Endothelial cell of umbilical vein (primary cell): ENCODE measurements at regions of chr14 and their contacts with region 1.

Region 1: GRCh38 chr14:50830932-50831725 is at the start of gene NIN:
- DNase-seq: peak; percentile 71
- H3K4me3 ChIP-seq: peak within 1 kb of the TSS; percentile 67 to 92 (median 69)
- H3K27ac ChIP-seq: peak within 1 kb of the TSS; percentile 61
- H3K4me1 ChIP-seq: peaks cover 20% of the 10 kb centered on the region
- H3K27me3 ChIP-seq: no peaks in the 10 kb centered on the region
- CTCF ChIP-seq: no peak
- POLR2A ChIP-seq: peak; percentile 60
- total RNA-seq, gene NIN: 68.2 and 76.3 TPM in 2 replicates

Region 2: GRCh38 chr14:50311975-50312733 is 519.0 kb before region 1 on chr14 and contains the starts of genes DMAC2L and L2HGDH:
- CTCF ChIA-PET with region 1: no interaction called
- POLR2A ChIA-PET with region 1: interaction called, 3 read pairs
- dilution Hi-C with region 1: no loop called
- intact Hi-C with region 1: loop called (anchors 10 kb)
- DNase-seq: peak; percentile 95
- H3K4me3 ChIP-seq: peak within 1 kb of the TSS; percentile 64 to 83 (median 79)
- H3K27ac ChIP-seq: peak within 1 kb of the TSS; percentile 66
- H3K4me1 ChIP-seq: peaks cover 15% of the 10 kb centered on the region
- H3K27me3 ChIP-seq: no peaks in the 10 kb centered on the region
- CTCF ChIP-seq: peak in 1 of 2 donors; percentile 60
- POLR2A ChIP-seq: peak; percentile 91
- total RNA-seq, gene DMAC2L: 7.9 and 13.9 TPM in 2 replicates
- total RNA-seq, gene L2HGDH: 5.3 and 5.4 TPM in 2 replicates

Region 3: DNA sequence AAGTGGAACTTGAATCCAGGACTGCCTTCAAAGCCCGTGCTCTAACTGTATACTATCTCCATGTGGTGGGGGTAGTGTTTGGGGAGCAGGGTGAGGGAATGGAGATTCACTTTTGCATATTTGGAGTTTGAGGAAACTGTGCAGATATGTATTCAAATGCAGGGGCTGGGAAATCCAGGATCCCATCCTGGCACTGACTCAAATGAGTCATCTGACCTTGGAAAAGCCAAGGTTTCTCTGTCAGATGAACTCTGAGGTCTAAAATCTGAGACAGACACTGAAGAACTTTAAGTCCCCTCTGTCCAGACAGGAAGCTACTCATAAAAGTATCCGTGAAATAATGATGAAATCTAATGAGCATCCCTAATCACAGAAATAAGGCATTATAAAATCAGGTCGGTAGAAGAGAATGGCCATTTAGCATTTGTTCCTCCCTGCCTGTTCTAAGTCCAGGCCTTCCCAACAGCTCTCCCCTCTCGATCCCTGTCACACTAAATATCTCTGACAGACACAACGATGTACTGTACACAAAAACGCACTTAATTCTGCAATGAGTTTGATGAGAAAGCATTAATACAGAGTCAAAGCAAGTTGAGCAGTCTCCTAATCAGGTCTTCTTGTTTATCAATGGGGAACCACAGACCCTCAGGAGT is 14.6 kb before region 1 on chr14:
- CTCF ChIA-PET with region 1: interaction called, 10 read pairs
- POLR2A ChIA-PET with region 1: no interaction called
- dilution Hi-C with region 1: no loop called
- intact Hi-C with region 1: loop called (anchors 2 kb)
- DNase-seq: peak; percentile 73
- H3K4me3 ChIP-seq: no peak overlapping the region
- H3K27ac ChIP-seq: peak overlapping the region; percentile 67
- H3K4me1 ChIP-seq: peaks cover 11% of the 10 kb centered on the region
- H3K27me3 ChIP-seq: no peaks in the 10 kb centered on the region
- CTCF ChIP-seq: no peak
- POLR2A ChIP-seq: no peak

Region 4: GRCh38 chr14:50892255-50892654 is 61.1 kb after region 1 on chr14:
- CTCF ChIA-PET with region 1: no interaction called
- POLR2A ChIA-PET with region 1: no interaction called
- dilution Hi-C with region 1: no loop called
- intact Hi-C with region 1: no loop called
- DNase-seq: no peak
- H3K4me3 ChIP-seq: no peak overlapping the region
- H3K27ac ChIP-seq: no peak overlapping the region
- H3K4me1 ChIP-seq: no peaks in the 10 kb centered on the region
- H3K27me3 ChIP-seq: no peaks in the 10 kb centered on the region
- CTCF ChIP-seq: no peak
- POLR2A ChIP-seq: no peak